PC-9 (cell line): ENCODE measurements at regions of chr12 and their contacts with region 1.

Region 1: DNA sequence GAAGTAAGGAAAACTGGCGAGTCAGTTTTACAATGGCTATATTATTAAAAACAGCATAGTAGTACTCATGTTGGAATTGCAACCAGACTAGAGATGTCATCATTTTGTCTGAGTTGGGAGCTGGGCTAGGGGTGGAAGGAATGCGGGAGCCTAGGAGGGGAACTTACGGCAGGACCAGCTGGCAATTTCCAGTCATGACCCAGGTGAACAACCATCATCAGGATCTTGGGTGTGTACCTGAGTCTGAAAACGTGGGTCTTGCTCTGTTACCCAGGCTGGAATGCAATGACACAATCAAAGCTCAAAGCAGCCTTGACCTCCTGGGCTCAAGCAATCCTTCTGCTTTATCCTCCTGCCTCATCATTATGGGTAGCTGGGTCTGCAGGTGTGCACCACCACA is 50.9 kb downstream of the ALG10B start:
- DNase-seq: no peak
- H3K4me3 ChIP-seq: no peak overlapping the region
- H3K27ac ChIP-seq: no peak overlapping the region
- H3K4me1 ChIP-seq: no peaks in the 10 kb centered on the region
- H3K27me3 ChIP-seq: no peaks in the 10 kb centered on the region
- CTCF ChIP-seq: no peak

Region 2: DNA sequence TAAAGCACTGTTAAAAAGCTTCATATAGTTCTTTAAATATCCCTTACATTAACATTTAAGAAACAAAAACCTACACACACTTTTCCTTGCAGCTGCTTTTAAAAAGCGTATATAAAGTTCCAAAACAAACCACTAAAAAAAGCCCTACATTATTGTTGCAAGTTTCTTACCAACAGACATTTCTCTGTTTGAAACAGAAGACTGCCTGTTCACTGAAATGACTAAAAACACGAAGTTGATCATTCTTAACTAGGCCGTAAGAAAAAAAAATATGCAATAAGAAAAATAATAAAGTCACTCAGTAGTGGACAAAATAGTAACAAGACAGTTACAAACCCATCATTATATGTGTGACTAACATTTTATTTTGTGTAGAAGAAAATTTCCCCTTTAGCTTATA is 1038.1 kb after region 1 on chr12:
- CTCF ChIA-PET with region 1: no interaction called
- POLR2A ChIA-PET with region 1: interaction called, 13 read pairs
- intact Hi-C with region 1: no loop called
- DNase-seq: no peak
- H3K4me3 ChIP-seq: no peak overlapping the region
- H3K27ac ChIP-seq: no peak overlapping the region
- H3K4me1 ChIP-seq: no peaks in the 10 kb centered on the region
- H3K27me3 ChIP-seq: no peaks in the 10 kb centered on the region
- CTCF ChIP-seq: no peak